ENCODE measurements at regions of chr15 and their contacts with region 1.

Region 1: GRCh38 chr15:67456677-67457529 is 64.0 kb upstream of the C15orf61 start:
- DNase-seq: peak; percentile 69 to 93
- ATAC-seq: peak; percentile 94

Region 2: DNA sequence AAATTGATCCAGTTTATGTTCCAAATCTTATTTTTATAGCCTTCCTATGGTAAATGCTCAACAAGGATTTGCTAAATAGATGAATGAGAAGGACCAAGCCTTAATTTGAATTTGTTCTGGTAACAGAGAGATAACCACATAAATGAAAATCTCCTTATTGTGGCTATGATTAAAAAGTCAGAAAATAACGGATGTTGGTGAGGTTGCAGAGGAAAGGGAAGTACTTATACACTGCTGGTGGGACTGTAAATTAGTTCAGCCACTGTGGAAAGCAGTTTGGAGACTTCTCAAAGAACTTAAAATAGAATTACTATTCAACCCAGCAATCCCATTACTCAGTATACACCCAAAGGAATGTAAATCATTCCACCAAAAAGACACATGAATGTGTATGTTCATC is 228.6 kb before region 1 on chr15:
- intact Hi-C with region 1: no loop called
- DNase-seq: no peak
- ATAC-seq: no peak

Region 3: DNA sequence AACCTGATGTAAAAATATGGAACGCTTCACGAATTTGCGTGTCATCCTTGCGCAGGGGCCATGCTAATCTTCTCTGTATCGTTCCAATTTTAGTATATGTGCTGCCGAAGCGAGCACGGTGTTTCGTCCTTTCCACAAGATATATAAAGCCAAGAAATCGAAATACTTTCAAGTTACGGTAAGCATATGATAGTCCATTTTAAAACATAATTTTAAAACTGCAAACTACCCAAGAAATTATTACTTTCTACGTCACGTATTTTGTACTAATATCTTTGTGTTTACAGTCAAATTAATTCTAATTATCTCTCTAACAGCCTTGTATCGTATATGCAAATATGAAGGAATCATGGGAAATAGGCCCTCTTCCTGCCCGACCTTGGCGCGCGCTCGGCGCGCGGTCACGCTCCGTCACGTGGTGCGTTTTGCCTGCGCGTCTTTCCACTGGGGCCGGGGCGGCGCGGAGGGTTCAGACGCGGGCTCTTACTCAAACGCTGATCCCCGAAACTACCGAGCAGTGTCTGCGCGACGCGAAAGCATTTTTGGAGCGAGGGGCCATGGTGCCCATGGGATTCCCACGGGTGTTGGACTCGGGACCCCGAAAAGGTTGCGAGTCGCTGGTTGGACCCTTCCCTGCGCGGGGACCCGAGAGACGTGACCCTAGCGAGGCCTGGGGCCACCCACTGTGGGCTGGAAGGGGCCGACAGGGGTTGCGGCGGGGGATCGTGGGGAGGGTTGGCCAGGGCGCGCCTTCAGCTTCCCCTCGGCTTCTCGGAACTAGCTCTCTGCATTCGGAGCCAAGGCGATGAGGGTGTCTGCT is 383.2 kb after region 1 on chr15 and contains the start of gene RNU6-1:
- intact Hi-C with region 1: loop called in 1 of 2 experiments (anchors 5 kb)
- DNase-seq: peak; percentile 92 to 95
- ATAC-seq: peak; percentile 88
- total RNA-seq, gene RNU6-1: not detected

Measured in left colon (tissue), 2 donors.